Right ventricle myocardium inferior (tissue), 1 donor: ENCODE measurements at regions of chr4 and their contacts with region 1.

Region 1: GRCh38 chr4:76585897-76586360 is 150.9 kb downstream of the SHROOM3 start:
- DNase-seq: peak; percentile 84
- ATAC-seq: peak; percentile 83

Region 2: DNA sequence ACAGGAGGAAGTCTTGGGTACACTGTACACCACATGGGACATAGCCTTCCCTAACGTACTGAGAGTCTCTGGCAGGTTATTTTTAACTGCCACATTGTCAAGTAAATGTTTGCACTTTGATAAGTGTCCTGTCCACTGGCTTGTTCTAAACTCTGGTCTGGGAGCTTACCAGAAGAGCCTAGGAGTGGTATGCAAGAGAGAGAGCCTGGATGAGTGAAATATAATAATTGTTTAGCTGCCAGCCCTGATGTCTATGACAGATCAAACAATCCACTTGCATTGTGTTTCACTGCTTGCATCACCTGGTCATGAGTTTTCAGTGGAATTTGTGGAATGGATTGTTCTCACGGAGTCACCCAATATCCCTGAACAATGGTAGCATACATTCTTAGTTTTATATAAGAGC is 59.3 kb before region 1 on chr4:
- intact Hi-C with region 1: loop called (anchors 2 kb)
- DNase-seq: no peak
- ATAC-seq: peak; percentile 93

Region 3: GRCh38 chr4:76562161-76562560 is 23.8 kb before region 1 on chr4:
- intact Hi-C with region 1: loop called (anchors 1 kb)
- DNase-seq: no peak
- ATAC-seq: peak; percentile 68